Lower leg skin (tissue), 4 donors: ENCODE measurements at regions of chr10 and their contacts with region 1.

Region 1: GRCh38 chr10:59283456-59284091 is 78.8 kb downstream of the FAM13C start:
- DNase-seq: no peak
- H3K4me3 ChIP-seq: no peak overlapping the region
- CTCF ChIP-seq: no peak
- POLR2A ChIP-seq: no peak

Region 2: GRCh38 chr10:59314268-59314667 is 30.7 kb after region 1 on chr10:
- intact Hi-C with region 1: no loop called
- DNase-seq: no peak
- H3K4me3 ChIP-seq: no peak overlapping the region
- CTCF ChIP-seq: no peak
- POLR2A ChIP-seq: no peak

Region 3: DNA sequence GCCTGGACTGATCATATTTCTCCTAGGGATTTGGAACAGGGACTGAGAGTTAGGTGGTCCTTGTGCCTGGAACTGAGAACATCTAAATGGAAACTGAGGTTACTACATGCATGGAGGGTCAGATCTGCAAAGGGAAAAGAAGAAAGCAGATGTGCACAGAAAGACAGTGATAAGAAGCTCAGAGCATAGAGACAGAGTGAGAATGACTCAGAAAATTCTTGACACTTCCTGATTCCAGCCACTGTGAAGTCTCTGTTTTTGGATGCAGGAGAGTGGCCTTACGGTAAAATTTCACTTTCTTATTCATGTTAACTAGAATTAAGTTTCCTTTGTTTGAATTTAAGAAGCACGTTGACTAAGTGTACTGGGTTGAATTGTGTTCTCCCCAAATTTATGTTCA is 1927.9 kb after region 1 on chr10:
- intact Hi-C with region 1: loop called (anchors 10 kb)
- DNase-seq: no peak
- H3K4me3 ChIP-seq: no peak overlapping the region
- CTCF ChIP-seq: no peak
- POLR2A ChIP-seq: no peak